CD8-positive, alpha-beta T cell (primary cell): ENCODE measurements at regions of chr11 and their contacts with region 1.

Region 1: DNA sequence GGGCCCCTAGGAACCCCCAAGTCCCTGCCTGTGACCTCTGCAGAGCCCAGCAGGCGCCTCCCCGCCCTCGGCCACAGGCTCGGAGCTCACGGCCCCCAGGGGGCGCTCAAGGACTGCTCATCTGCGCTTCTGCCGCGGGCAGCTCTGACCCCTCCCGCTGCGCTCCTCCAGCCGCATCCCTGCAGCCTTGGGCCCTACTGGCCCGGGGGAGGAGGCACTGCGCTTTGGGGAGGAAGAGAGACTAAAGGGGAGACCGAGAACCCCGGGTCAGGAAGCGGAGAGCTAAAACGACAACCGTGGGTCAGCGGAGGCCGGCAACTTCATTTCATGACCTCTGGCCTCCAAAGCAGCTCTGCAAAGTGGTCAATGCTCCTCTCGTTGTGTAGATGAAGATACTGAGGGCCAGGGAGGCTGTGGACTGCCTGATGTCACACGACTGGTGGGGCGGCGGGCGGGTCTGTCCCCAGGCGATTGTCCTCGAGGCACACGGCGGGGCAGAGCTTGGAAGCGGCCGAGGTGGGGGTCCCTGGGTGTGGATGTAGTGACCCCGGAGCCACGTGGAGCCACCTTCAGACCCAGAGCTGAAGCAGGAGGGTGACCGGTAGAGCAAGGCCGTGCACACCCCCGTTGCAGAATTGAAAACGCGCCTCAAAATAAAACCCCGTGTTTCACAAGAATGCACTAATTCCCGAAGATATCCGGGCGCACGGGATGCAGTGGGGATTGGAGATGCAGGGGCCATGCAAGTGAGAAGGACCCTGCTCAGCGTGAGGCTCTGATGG is 2.7 kb upstream of the KRTAP5-6 start:
- DNase-seq: peak; percentile 63 to 90 (median 82)
- ATAC-seq: peak; percentile 85
- H3K4me3 ChIP-seq: no peak overlapping the region
- H3K4me3 Mint-ChIP-seq: no peak overlapping the region
- H3K27ac ChIP-seq: no peak overlapping the region
- H3K27ac Mint-ChIP-seq: no peak overlapping the region
- H3K4me1 ChIP-seq: peaks cover 16% of the 10 kb centered on the region
- H3K4me1 Mint-ChIP-seq: peaks cover 3% of the 10 kb centered on the region
- H3K27me3 ChIP-seq: peaks cover 0 to 7% of the 10 kb centered on the region in 2 experiments
- H3K27me3 Mint-ChIP-seq: peaks cover 16% of the 10 kb centered on the region
- CTCF ChIP-seq: peak; percentile 64

Region 2: GRCh38 chr11:1706634-1707400 is 12.6 kb after region 1 on chr11:
- CTCF ChIA-PET with region 1: interaction called, 40 read pairs
- POLR2A ChIA-PET with region 1: interaction called, 3 read pairs
- intact Hi-C with region 1: no loop called
- DNase-seq: peak in 1 of 9 experiments; percentile 34
- ATAC-seq: no peak
- H3K4me3 ChIP-seq: no peak overlapping the region
- H3K4me3 Mint-ChIP-seq: no peak overlapping the region
- H3K27ac ChIP-seq: no peak overlapping the region
- H3K27ac Mint-ChIP-seq: no peak overlapping the region
- H3K4me1 ChIP-seq: peaks cover under 1% of the 10 kb centered on the region
- H3K4me1 Mint-ChIP-seq: peaks cover 1% of the 10 kb centered on the region
- H3K27me3 ChIP-seq: no peaks in the 10 kb centered on the region
- H3K27me3 Mint-ChIP-seq: no peaks in the 10 kb centered on the region
- CTCF ChIP-seq: no peak

Region 3: DNA sequence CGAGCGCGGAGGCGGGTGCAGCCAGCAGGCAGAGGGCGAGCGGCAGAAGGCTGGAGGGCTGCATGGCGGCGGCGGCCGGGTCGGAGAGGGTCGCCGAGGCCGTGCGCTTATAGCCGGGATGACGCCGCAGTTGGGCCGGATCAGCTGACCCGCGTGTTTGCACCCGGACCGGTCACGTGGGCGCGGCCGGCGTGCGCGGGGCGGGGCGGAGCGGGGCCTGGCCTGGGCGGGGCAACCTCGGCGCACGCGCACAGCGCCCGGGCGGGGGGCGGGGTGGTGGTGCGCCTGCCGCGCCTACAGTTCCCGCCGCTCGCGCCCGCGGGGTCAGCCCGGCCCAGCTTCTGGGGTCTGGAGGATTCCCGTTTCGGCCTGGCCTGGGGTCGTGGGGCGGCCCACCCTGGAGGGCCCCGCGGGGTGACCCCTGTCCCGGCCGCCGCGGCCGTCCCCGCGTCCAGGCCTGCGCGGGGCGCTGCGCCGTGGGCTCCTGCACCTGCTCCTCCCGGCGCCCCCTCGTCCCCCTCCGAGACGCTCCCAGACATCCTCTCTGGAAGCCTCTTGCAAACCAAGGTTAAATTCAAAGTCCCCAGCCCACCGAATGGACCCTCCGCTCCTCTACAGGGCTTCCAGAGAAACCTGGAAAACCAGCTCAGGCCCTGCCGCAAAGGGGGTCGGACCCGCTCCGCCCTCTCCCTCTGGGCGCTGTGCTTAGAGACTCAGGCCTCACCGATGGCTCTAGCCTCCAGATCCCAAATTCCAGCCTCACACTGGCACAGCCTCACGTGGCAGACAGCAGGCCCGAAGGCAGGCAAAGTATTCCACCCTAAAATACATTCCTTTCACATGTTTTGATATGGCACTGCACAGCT is 69.8 kb after region 1 on chr11 and contains the start of gene CTSD:
- CTCF ChIA-PET with region 1: interaction called, 19 read pairs
- POLR2A ChIA-PET with region 1: no interaction called
- intact Hi-C with region 1: loop called in 1 of 2 experiments (anchors 2 kb)
- DNase-seq: peak; percentile 69 to 95 (median 88)
- ATAC-seq: peak; percentile 87
- H3K4me3 ChIP-seq: peak within 1 kb of the TSS; percentile 66 to 85
- H3K4me3 Mint-ChIP-seq: peak within 1 kb of the TSS; percentile 87
- H3K27ac ChIP-seq: peak within 1 kb of the TSS; percentile 45 to 62
- H3K27ac Mint-ChIP-seq: peak within 1 kb of the TSS; percentile 86
- H3K4me1 ChIP-seq: peaks cover 49% of the 10 kb centered on the region
- H3K4me1 Mint-ChIP-seq: peaks cover 35% of the 10 kb centered on the region
- H3K27me3 ChIP-seq: no peaks in the 10 kb centered on the region
- H3K27me3 Mint-ChIP-seq: no peaks in the 10 kb centered on the region
- CTCF ChIP-seq: no peak
- total RNA-seq, gene CTSD: 54.3 to 57.9 TPM

Region 4: GRCh38 chr11:1827095-1827813 is 133.0 kb after region 1 on chr11:
- CTCF ChIA-PET with region 1: interaction called, 513 read pairs
- POLR2A ChIA-PET with region 1: no interaction called
- intact Hi-C with region 1: loop called in 1 of 2 experiments (anchors 1 kb)
- DNase-seq: no peak
- ATAC-seq: no peak
- H3K4me3 ChIP-seq: no peak overlapping the region
- H3K4me3 Mint-ChIP-seq: no peak overlapping the region
- H3K27ac ChIP-seq: no peak overlapping the region
- H3K27ac Mint-ChIP-seq: no peak overlapping the region
- H3K4me1 ChIP-seq: no peaks in the 10 kb centered on the region
- H3K4me1 Mint-ChIP-seq: no peaks in the 10 kb centered on the region
- H3K27me3 ChIP-seq: no peaks in the 10 kb centered on the region
- H3K27me3 Mint-ChIP-seq: peaks cover 2% of the 10 kb centered on the region
- CTCF ChIP-seq: no peak

Region 5: DNA sequence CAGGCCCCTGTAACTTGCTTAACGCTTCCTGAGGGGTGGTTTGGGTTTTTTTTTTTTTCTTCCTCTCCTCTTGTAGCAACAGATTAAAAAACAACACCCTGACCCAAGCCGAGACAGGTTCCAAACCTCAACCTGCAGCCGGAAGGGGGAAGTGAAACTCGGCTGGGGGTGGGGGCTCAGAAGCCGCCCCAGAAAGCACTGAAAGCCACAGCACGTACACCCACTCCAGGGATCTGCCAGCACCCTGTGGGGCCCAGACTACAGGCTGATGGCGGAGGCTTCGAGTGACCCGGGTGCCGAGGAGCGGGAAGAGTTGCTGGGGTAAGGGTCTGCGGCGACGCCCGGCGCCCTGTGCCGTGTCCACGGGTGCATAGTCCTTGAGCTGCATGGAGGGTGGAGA is 158.6 kb after region 1 on chr11 and contains the start of gene LSP1:
- CTCF ChIA-PET with region 1: interaction called, 24 read pairs
- POLR2A ChIA-PET with region 1: interaction called, 3 read pairs
- intact Hi-C with region 1: no loop called
- DNase-seq: peak; percentile 64 to 96 (median 86)
- ATAC-seq: peak; percentile 65
- H3K4me3 ChIP-seq: peak within 1 kb of the TSS; percentile 81 to 100
- H3K4me3 Mint-ChIP-seq: peak within 1 kb of the TSS; percentile 94
- H3K27ac ChIP-seq: peak within 1 kb of the TSS; percentile 90 to 91
- H3K27ac Mint-ChIP-seq: peak within 1 kb of the TSS; percentile 92
- H3K4me1 ChIP-seq: peaks cover 81% of the 10 kb centered on the region
- H3K4me1 Mint-ChIP-seq: peaks cover 67% of the 10 kb centered on the region
- H3K27me3 ChIP-seq: no peaks in the 10 kb centered on the region
- H3K27me3 Mint-ChIP-seq: no peaks in the 10 kb centered on the region
- CTCF ChIP-seq: no peak
- total RNA-seq, gene LSP1: 190 to 191 TPM

Region 6: GRCh38 chr11:2002807-2003206 is 308.6 kb after region 1 on chr11:
- CTCF ChIA-PET with region 1: interaction called, 101 read pairs
- POLR2A ChIA-PET with region 1: no interaction called
- intact Hi-C with region 1: no loop called
- DNase-seq: no peak
- ATAC-seq: peak; percentile 50
- H3K4me3 ChIP-seq: no peak overlapping the region
- H3K4me3 Mint-ChIP-seq: no peak overlapping the region
- H3K27ac ChIP-seq: no peak overlapping the region
- H3K27ac Mint-ChIP-seq: no peak overlapping the region
- H3K4me1 ChIP-seq: no peaks in the 10 kb centered on the region
- H3K4me1 Mint-ChIP-seq: no peaks in the 10 kb centered on the region
- H3K27me3 ChIP-seq: no peaks in the 10 kb centered on the region
- H3K27me3 Mint-ChIP-seq: no peaks in the 10 kb centered on the region
- CTCF ChIP-seq: no peak